ENCODE measurements at regions of chr15 and their contacts with region 1.

Region 1: GRCh38 chr15:95284933-95285421 is 1045.5 kb upstream of the NR2F2 start:
- DNase-seq: peak; percentile 70
- ATAC-seq: peak; percentile 24
- H3K4me3 ChIP-seq: no peak overlapping the region
- H3K27ac ChIP-seq: peak overlapping the region; percentile 49; the same call in 1 of the 2 replicates
- H3K4me1 ChIP-seq: peaks cover 15% of the 10 kb centered on the region
- H3K27me3 ChIP-seq: no peaks in the 10 kb centered on the region
- CTCF ChIP-seq: peak; percentile 33
- POLR2A ChIP-seq: no peak
- RAD21 ChIP-seq: peak; percentile 41

Region 2: GRCh38 chr15:95429345-95429744 is 144.4 kb after region 1 on chr15:
- CTCF ChIA-PET with region 1: no interaction called
- POLR2A ChIA-PET with region 1: no interaction called
- dilution Hi-C with region 1: no loop called
- in situ Hi-C with region 1: no loop called
- intact Hi-C with region 1: no loop called
- DNase-seq: peak; percentile 9
- ATAC-seq: no peak; the same call in 1 of the 2 replicates
- H3K4me3 ChIP-seq: no peak overlapping the region
- H3K27ac ChIP-seq: no peak overlapping the region
- H3K4me1 ChIP-seq: no peaks in the 10 kb centered on the region
- H3K27me3 ChIP-seq: no peaks in the 10 kb centered on the region
- CTCF ChIP-seq: no peak
- POLR2A ChIP-seq: no peak
- RAD21 ChIP-seq: no peak

Region 3: DNA sequence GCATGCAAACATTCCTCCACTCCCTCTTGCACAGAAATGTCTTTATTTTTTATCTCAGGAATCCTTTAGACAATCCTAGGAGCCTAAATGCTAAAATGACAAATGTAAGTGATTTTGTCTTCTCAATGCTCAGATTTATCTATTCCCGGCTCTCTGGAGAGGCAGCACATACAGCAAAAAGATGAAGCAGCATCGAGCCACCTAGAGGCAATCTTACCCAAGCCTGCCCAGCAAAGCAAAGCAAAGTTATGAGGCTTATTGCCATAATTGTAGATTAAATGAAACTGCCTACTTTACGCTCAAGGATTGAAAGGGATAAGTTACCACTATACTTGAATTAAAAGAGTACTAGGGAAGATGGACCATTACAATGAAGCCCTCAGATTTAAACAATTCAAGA is 295.2 kb after region 1 on chr15:
- CTCF ChIA-PET with region 1: no interaction called
- POLR2A ChIA-PET with region 1: no interaction called
- dilution Hi-C with region 1: no loop called
- in situ Hi-C with region 1: no loop called
- intact Hi-C with region 1: no loop called
- DNase-seq: no peak
- ATAC-seq: no peak
- H3K4me3 ChIP-seq: no peak overlapping the region
- H3K27ac ChIP-seq: no peak overlapping the region
- H3K4me1 ChIP-seq: no peaks in the 10 kb centered on the region
- H3K27me3 ChIP-seq: no peaks in the 10 kb centered on the region
- CTCF ChIP-seq: no peak
- POLR2A ChIP-seq: no peak
- RAD21 ChIP-seq: no peak

Region 4: DNA sequence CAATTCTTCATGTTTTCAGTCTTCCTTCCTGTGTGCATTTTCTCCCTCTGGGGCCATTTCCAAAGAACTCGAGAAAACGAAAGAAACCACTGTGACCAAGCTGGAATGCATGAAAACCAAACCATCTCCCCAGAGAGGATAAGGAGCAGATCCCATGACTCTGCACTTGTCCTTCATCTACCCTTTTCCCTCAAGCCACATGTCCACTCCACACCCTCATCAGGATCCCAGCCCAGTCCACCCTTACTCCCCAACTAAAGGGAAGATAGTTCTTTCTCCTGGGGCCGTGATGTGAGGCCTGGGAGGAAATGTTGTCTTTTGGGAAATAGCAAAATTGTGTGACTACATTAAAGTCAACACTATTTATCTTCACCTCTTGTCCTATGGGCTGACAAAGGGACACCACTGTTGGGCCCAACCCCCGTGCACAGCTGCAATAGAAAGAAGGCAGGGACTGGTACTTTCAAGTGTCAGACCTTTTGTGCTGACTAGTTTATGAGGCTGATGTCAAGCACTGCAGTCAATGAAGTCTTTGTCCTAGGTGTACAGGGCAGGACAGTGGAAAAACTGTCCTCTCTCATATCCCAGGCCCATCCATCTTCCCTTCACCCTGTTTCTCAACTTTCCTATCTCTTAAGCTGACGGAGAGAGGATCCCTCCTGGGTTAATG is 558.4 kb after region 1 on chr15:
- CTCF ChIA-PET with region 1: no interaction called
- POLR2A ChIA-PET with region 1: no interaction called
- dilution Hi-C with region 1: no loop called
- in situ Hi-C with region 1: no loop called
- intact Hi-C with region 1: loop called (anchors 10 kb)
- DNase-seq: no peak
- ATAC-seq: no peak
- H3K4me3 ChIP-seq: no peak overlapping the region
- H3K27ac ChIP-seq: no peak overlapping the region
- H3K4me1 ChIP-seq: peaks cover 20% of the 10 kb centered on the region
- H3K27me3 ChIP-seq: no peaks in the 10 kb centered on the region
- CTCF ChIP-seq: no peak
- POLR2A ChIP-seq: no peak
- RAD21 ChIP-seq: no peak

Region 5: GRCh38 chr15:96170979-96171739 is 886.2 kb after region 1 on chr15:
- CTCF ChIA-PET with region 1: no interaction called
- POLR2A ChIA-PET with region 1: no interaction called
- dilution Hi-C with region 1: no loop called
- in situ Hi-C with region 1: no loop called
- intact Hi-C with region 1: loop called (anchors 10 kb)
- DNase-seq: no peak
- ATAC-seq: no peak
- H3K4me3 ChIP-seq: no peak overlapping the region
- H3K27ac ChIP-seq: no peak overlapping the region
- H3K4me1 ChIP-seq: peaks cover 2% of the 10 kb centered on the region; the same call in 1 of the 2 replicates
- H3K27me3 ChIP-seq: no peaks in the 10 kb centered on the region
- CTCF ChIP-seq: no peak
- POLR2A ChIP-seq: no peak
- RAD21 ChIP-seq: no peak

Region 6: GRCh38 chr15:97009031-97009431 is 1724.1 kb after region 1 on chr15:
- CTCF ChIA-PET with region 1: no interaction called
- POLR2A ChIA-PET with region 1: no interaction called
- dilution Hi-C with region 1: no loop called
- in situ Hi-C with region 1: no loop called
- intact Hi-C with region 1: no loop called
- DNase-seq: no peak
- ATAC-seq: no peak
- H3K4me3 ChIP-seq: no peak overlapping the region
- H3K27ac ChIP-seq: no peak overlapping the region
- H3K4me1 ChIP-seq: no peaks in the 10 kb centered on the region
- H3K27me3 ChIP-seq: no peaks in the 10 kb centered on the region
- CTCF ChIP-seq: no peak
- POLR2A ChIP-seq: no peak
- RAD21 ChIP-seq: no peak

Measured in IMR-90 (cell line).